ENCODE measurements at regions of chr5 and their contacts with region 1.

Region 1: DNA sequence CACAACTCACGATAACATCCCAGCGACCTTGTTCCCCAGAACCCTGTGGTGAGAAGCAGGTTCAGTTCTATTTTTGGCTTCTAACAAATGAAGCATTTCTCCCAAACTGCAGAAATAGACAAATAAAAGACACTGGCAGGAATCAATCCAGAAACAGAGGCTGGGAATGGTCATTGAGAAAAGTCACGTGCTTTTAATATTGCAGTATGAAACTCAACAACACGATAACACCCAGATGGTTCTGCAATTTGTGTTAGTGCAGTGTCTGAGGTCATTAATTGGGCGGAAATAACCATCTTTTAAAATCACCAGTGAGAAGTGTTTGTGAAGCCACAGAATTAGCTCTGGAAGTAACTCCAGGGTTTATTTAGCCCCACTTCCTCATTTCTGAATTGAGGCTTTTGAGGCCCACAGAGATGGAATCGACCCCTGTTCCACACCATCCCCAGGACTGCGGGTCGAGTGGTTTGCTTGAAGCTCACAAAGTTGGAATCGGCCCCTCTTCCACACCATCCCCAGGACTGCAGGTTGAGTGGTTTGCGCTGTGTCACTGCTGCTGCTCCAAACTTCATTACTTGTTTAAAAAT is 164.7 kb upstream of the IRX4 start:
- DNase-seq: no peak
- H3K4me3 ChIP-seq: no peak overlapping the region
- H3K27ac ChIP-seq: no peak overlapping the region
- H3K4me1 ChIP-seq: no peaks in the 10 kb centered on the region
- H3K27me3 ChIP-seq: peaks cover 0 to 18% (median 0%) of the 10 kb centered on the region in 3 donors
- CTCF ChIP-seq: no peak
- EP300 ChIP-seq: no peak
- POLR2A ChIP-seq: no peak

Region 2: DNA sequence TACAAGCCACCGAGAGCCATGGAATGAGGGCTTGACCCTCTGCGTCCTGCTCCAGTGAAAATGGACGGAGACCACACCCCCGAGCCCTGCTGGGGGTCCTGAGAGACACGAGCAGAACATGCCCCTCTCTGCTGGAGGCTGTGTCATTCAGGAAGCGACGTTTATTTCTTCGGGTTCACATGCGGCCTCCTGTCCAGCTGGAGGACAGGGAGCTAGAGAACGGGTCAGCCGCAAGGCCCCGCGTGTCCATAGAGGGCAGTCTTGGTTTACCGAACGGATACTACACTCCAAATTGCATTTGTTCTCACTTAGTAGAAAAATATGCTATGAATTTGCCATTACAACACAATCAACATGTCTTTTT is 283.9 kb before region 1 on chr5:
- intact Hi-C with region 1: loop called (anchors 10 kb)
- DNase-seq: peak in 1 of 2 donors; percentile 72
- H3K4me3 ChIP-seq: no peak overlapping the region
- H3K27ac ChIP-seq: no peak overlapping the region
- H3K4me1 ChIP-seq: no peaks in the 10 kb centered on the region
- H3K27me3 ChIP-seq: peaks cover 0 to 67% (median 8%) of the 10 kb centered on the region in 3 donors
- CTCF ChIP-seq: peak in 4 of 7 experiments; percentile 14 to 44 (median 22)
- EP300 ChIP-seq: no peak
- POLR2A ChIP-seq: no peak

Region 3: GRCh38 chr5:2223303-2223702 is 175.9 kb after region 1 on chr5:
- intact Hi-C with region 1: no loop called
- DNase-seq: peak in 1 of 2 donors; percentile 68
- H3K4me3 ChIP-seq: no peak overlapping the region
- H3K27ac ChIP-seq: no peak overlapping the region
- H3K4me1 ChIP-seq: no peaks in the 10 kb centered on the region
- H3K27me3 ChIP-seq: peaks cover 0 to 12% (median 0%) of the 10 kb centered on the region in 3 donors
- CTCF ChIP-seq: no peak
- EP300 ChIP-seq: no peak
- POLR2A ChIP-seq: no peak

Region 4: GRCh38 chr5:2948875-2949274 is 901.4 kb after region 1 on chr5:
- intact Hi-C with region 1: no loop called
- DNase-seq: no peak
- H3K4me3 ChIP-seq: no peak overlapping the region
- H3K27ac ChIP-seq: no peak overlapping the region
- H3K4me1 ChIP-seq: no peaks in the 10 kb centered on the region
- H3K27me3 ChIP-seq: no peaks in the 10 kb centered on the region
- CTCF ChIP-seq: no peak
- EP300 ChIP-seq: no peak
- POLR2A ChIP-seq: no peak